HEK293 (cell line): ENCODE measurements at regions of chr10 and their contacts with region 1.

Region 1: DNA sequence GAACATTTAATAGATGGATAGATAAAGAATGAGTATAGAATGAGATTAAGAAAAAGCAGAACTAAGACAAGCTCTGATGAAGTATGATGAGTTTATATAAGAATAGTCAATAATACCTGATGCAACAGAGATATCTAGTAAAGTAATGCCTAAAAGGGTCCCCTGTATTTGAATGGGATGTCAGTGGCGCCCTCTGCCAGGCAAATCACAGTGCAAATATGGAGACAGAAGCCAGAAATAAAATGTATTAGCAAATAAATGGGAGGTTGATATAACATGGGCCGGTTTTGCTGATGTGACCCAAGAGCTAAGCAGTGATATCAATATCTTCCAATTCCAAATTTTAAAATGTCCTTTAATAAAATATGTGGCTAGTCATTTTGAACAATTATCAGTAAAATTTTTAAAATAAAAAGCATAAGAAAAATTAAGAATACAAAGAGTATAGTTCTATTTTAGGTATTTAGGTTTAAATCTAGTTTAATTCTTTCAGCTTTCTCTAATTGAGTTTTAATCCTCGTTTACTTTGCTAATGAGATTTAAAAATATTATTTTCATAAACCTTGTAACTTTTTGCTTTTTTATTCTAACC is 62.6 kb downstream of the ADK start:
- H3K4me3 ChIP-seq: no peak overlapping the region
- H3K27ac ChIP-seq: no peak overlapping the region
- H3K4me1 ChIP-seq: no peaks in the 10 kb centered on the region
- CTCF ChIP-seq: no peak

Region 2: DNA sequence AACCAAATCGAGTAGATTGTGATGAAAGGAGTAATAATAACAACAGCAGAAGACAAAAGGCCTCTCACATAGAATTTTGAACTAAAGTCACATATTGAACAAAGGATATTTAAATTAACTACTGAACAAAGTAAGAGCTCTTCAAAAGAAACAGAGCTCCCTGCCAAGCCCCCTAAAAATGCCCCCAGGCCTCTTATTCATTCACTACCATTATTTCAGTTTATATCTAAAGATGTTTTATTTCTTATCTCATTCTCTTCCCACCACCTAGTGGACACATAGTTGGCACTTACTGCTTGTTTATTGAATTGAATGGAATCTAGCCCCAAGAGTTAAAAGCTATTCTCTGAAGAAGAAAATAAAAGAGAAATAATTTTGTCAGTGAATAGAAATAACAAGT is 178.4 kb before region 1 on chr10:
- CTCF ChIA-PET with region 1: no interaction called
- POLR2A ChIA-PET with region 1: no interaction called
- H3K4me3 ChIP-seq: no peak overlapping the region
- H3K27ac ChIP-seq: no peak overlapping the region
- H3K4me1 ChIP-seq: peaks cover 12% of the 10 kb centered on the region
- CTCF ChIP-seq: no peak

Region 3: DNA sequence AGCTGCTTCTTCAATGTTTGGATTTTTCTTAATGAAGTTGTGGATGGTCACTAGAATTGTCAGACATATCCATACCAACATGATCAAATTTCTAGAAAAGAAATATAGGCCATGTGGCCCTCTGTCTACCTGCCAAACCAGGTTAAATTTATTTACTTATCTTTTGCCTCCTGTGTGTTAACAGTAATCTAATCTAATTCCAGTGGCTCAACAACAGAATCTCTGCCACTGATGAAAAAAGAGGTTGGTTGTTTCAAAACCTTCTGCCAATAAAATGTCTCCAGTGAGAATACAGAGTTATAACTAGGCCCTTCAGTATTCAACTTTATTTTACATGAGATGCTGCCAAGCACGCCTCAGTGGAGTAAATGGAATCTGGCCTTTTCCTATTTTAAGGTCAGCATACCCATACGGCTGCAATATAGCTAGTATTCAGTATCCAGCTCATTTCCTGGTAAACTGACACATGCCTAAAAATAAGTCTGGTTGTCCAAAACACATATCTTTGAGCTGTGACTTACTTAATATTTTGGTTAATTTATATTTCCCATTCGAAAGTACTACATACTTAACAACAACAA is 79.3 kb before region 1 on chr10:
- CTCF ChIA-PET with region 1: interaction called, 10 read pairs
- POLR2A ChIA-PET with region 1: no interaction called
- H3K4me3 ChIP-seq: no peak overlapping the region
- H3K27ac ChIP-seq: no peak overlapping the region
- H3K4me1 ChIP-seq: no peaks in the 10 kb centered on the region
- CTCF ChIP-seq: no peak

Region 4: GRCh38 chr10:74156919-74157289 is 56.8 kb before region 1 on chr10:
- CTCF ChIA-PET with region 1: interaction called, 11 read pairs
- POLR2A ChIA-PET with region 1: no interaction called
- H3K4me3 ChIP-seq: no peak overlapping the region
- H3K27ac ChIP-seq: no peak overlapping the region
- H3K4me1 ChIP-seq: peaks cover 2% of the 10 kb centered on the region; the same call in 1 of the 2 replicates
- CTCF ChIP-seq: no peak

Region 5: GRCh38 chr10:74189999-74190421 is 23.7 kb before region 1 on chr10:
- CTCF ChIA-PET with region 1: interaction called, 15 read pairs
- POLR2A ChIA-PET with region 1: no interaction called
- H3K4me3 ChIP-seq: no peak overlapping the region
- H3K27ac ChIP-seq: peak overlapping the region; percentile 27
- H3K4me1 ChIP-seq: peaks cover 14% of the 10 kb centered on the region; the same call in 1 of the 2 replicates
- CTCF ChIP-seq: no peak

Region 6: GRCh38 chr10:74244097-74244685 is 30.5 kb after region 1 on chr10:
- CTCF ChIA-PET with region 1: interaction called, 11 read pairs
- POLR2A ChIA-PET with region 1: no interaction called
- H3K4me3 ChIP-seq: no peak overlapping the region
- H3K27ac ChIP-seq: no peak overlapping the region
- H3K4me1 ChIP-seq: no peaks in the 10 kb centered on the region
- CTCF ChIP-seq: peak; percentile 12; the same call in 1 of the 2 replicates